Heart right ventricle (tissue), 16 donors: ENCODE measurements at regions of chr1 and their contacts with region 1.

Region 1: DNA sequence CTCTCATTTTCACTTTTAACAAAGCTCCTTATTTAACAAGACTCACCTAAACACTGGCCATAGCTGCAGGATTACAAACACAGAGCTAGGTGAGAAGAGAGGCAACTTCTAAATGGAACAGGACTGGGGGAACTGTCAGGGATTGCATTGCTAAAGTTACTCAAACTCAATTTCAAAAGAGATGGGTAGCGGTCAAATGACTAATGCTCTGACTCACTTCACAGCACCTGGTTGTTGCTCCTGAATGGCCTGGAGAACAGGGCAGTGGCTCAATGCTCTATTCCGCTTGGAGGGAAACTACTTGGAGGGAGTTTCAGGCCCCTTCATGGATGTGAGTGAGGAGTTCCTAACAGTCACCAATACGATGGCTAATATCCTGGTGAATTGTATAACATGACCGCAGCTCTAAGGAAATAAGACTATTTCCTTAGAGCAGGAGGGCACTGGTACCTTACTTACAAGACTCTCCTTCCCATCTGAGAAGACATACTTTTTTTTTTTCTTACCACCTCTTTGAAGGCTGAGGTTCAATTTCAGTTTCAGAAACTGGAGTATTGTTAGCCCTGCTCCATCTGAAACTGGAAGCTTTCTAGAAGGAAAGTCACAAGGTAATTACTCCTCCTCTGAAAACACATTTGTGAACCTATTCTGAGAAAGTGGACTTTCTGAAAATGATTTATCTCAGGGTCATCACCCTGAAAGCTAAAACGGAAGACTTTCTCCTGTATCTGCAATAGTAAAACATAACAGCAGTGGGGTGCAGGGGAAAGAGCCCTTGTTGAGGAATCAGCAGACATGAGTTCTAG is 9.5 kb downstream of the DPT start:
- DNase-seq: no peak
- ATAC-seq: no peak
- H3K4me3 ChIP-seq: no peak overlapping the region
- H3K27ac ChIP-seq: peak overlapping the region in 1 of 10 donors; percentile 28
- H3K4me1 ChIP-seq: peaks cover 0 to 35% (median 4%) of the 10 kb centered on the region in 9 donors
- H3K27me3 ChIP-seq: no peaks in the 10 kb centered on the region
- CTCF ChIP-seq: no peak

Region 2: DNA sequence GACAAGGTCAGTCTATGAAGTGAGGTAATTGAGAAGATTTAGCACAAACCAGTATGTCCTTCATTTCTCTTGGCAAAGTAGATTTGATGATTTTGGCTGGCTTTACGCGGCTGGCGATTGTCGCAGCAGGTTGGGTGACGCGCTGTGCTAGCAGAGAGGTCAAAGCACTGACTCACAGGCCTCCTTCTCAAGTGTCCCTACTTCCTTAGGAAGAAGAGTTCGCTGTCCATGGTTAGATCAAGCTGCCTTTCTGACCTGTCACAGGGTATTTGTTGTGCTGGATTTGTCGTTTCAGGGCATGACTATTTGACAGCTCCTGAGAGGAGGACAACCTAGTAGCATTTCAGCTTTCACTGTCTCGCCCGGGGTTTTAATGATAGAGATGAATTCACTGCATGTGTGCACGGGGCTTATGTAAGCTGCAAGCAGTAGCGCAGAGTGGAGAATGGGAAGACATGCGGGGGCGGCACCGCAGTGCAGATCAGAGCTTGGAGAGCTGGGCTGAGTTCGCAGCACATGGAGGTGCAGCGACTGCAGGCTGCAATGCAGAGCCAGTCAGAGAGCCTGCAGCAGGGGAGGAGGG is 110.3 kb before region 1 on chr1:
- intact Hi-C with region 1: loop called in 1 of 10 experiments (anchors 5 kb)
- DNase-seq: peak; percentile 27 to 50
- ATAC-seq: peak; percentile 39 to 70 (median 64)
- H3K4me3 ChIP-seq: peak overlapping the region in 1 of 10 donors; percentile 9
- H3K27ac ChIP-seq: peak overlapping the region in 7 of 10 donors; percentile 37 to 64 (median 44)
- H3K4me1 ChIP-seq: peaks cover 3 to 34% (median 23%) of the 10 kb centered on the region in 9 donors
- H3K27me3 ChIP-seq: no peaks in the 10 kb centered on the region
- CTCF ChIP-seq: no peak

Region 3: DNA sequence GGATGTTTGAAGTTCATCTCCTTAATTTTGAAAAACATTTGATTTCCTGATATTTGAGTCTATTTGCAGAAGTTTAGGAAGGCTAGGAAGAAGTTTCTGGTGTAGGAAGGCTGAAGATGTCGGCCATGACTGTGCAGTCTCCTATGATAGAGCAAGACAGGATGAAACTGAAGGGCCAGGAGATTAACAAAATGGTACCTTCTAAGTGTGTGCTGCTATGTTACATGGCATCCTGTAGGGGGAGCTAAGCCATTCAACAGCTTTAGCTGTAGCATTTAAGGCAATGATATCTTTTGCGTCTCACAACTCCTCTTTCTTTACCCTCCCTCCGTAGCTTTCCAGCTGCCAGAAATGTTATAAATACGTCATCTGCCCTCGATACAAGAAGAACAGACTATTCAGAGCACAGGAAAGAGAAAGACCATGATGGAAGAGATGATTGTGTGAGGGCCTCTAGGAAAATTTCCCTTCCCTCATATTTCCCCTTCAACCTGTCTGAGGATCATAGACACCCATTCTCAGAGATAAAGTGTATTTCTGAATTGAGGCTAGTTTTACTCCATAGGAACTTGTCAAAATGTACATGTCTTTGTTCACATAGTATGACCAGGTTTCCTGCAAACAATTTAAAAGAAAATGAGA is 82.0 kb before region 1 on chr1:
- intact Hi-C with region 1: loop called in 2 of 10 experiments (anchors 5 kb)
- DNase-seq: no peak
- ATAC-seq: peak in 7 of 8 donors; percentile 29 to 65 (median 47)
- H3K4me3 ChIP-seq: no peak overlapping the region
- H3K27ac ChIP-seq: peak overlapping the region in 8 of 10 donors; percentile 36 to 66 (median 48)
- H3K4me1 ChIP-seq: peaks cover 0 to 14% (median 0%) of the 10 kb centered on the region in 9 donors
- H3K27me3 ChIP-seq: no peaks in the 10 kb centered on the region
- CTCF ChIP-seq: peak; percentile 36 to 69 (median 58)

Region 4: DNA sequence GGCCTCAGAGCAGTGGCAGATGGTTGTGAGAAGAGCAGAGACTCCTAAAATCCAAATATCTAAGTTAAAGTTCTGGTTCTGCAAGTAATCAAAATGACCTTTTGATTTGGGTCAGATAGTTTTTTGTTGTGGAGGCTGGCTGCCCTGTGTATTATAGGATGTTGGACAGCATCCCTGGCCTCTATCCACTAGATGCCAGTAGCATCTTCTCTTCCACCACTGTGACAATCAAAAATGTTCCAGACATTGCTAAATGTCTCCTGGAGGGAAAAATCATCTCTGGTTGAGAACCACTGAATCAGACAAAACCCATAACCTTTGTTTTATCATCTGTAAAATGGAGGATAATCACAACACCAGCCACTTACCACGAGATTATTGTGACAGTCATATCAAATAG is 15.4 kb after region 1 on chr1:
- intact Hi-C with region 1: no loop called
- DNase-seq: no peak
- ATAC-seq: peak in 2 of 8 donors; percentile 50 to 62
- H3K4me3 ChIP-seq: no peak overlapping the region
- H3K27ac ChIP-seq: peak overlapping the region in 2 of 10 donors; percentile 16 to 25
- H3K4me1 ChIP-seq: peaks cover 2 to 25% (median 16%) of the 10 kb centered on the region in 9 donors
- H3K27me3 ChIP-seq: no peaks in the 10 kb centered on the region
- CTCF ChIP-seq: peak in 6 of 9 donors; percentile 13 to 36 (median 26)

Region 5: DNA sequence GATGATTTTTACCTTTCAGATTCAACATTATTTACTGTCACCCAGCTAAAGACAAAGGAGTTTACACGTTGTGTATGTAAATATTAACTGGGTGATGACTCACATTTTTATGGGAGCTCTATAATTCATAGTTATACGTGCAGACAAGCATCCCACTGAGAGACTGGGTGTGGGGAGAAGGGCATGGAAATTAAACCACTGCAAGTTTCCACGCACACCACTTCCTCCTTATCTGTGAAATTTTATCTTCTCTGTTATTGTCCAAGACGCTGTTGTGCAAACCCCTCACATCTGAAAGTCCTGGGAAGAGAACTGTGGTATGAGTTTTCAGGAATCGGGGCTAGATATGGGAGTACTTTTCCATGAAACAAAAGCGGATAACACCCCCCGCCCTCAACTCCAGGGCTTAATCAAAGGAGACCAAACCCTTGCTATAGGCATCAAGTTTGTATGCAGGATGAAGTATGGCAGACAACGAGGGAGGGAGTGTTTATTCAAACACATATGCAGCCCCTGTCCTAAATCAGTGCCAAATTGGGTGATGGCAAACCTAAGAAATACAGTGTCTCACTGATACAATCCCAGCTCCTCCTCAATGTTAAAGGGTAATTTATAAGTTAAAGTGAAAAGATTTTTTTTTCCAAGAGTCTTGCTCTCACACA is 32.8 kb after region 1 on chr1:
- intact Hi-C with region 1: no loop called
- DNase-seq: no peak
- ATAC-seq: no peak
- H3K4me3 ChIP-seq: no peak overlapping the region
- H3K27ac ChIP-seq: no peak overlapping the region
- H3K4me1 ChIP-seq: no peaks in the 10 kb centered on the region
- H3K27me3 ChIP-seq: no peaks in the 10 kb centered on the region
- CTCF ChIP-seq: no peak

Region 6: GRCh38 chr1:168767894-168768584 is 48.5 kb after region 1 on chr1:
- intact Hi-C with region 1: loop called in 1 of 10 experiments (anchors 5 kb)
- DNase-seq: peak; percentile 13 to 65
- ATAC-seq: peak; percentile 83 to 95 (median 91)
- H3K4me3 ChIP-seq: no peak overlapping the region
- H3K27ac ChIP-seq: peak overlapping the region in 9 of 10 donors; percentile 11 to 73 (median 59)
- H3K4me1 ChIP-seq: peaks cover 0 to 23% (median 12%) of the 10 kb centered on the region in 9 donors
- H3K27me3 ChIP-seq: no peaks in the 10 kb centered on the region
- CTCF ChIP-seq: no peak